GM23248 (cell line): ENCODE measurements at regions of chr16 and their contacts with region 1.

Region 1: GRCh38 chr16:25838724-25839186 is 147.0 kb downstream of the HS3ST4 start:
- DNase-seq: peak; percentile 67
- H3K4me3 ChIP-seq: 0 out of 2 replicates have a peak overlapping the region, but pooled peaks have one; percentile 35
- H3K27ac ChIP-seq: no peak overlapping the region
- H3K4me1 ChIP-seq: peaks cover 3% of the 10 kb centered on the region; the same call in 1 of the 2 replicates
- H3K27me3 ChIP-seq: no peaks in the 10 kb centered on the region; the same call in 1 of the 2 replicates

Region 2: GRCh38 chr16:25785361-25785760 is 53.4 kb before region 1 on chr16:
- in situ Hi-C with region 1: no loop called
- DNase-seq: no peak
- H3K4me3 ChIP-seq: no peak overlapping the region
- H3K27ac ChIP-seq: no peak overlapping the region
- H3K4me1 ChIP-seq: no peaks in the 10 kb centered on the region
- H3K27me3 ChIP-seq: no peaks in the 10 kb centered on the region

Region 3: DNA sequence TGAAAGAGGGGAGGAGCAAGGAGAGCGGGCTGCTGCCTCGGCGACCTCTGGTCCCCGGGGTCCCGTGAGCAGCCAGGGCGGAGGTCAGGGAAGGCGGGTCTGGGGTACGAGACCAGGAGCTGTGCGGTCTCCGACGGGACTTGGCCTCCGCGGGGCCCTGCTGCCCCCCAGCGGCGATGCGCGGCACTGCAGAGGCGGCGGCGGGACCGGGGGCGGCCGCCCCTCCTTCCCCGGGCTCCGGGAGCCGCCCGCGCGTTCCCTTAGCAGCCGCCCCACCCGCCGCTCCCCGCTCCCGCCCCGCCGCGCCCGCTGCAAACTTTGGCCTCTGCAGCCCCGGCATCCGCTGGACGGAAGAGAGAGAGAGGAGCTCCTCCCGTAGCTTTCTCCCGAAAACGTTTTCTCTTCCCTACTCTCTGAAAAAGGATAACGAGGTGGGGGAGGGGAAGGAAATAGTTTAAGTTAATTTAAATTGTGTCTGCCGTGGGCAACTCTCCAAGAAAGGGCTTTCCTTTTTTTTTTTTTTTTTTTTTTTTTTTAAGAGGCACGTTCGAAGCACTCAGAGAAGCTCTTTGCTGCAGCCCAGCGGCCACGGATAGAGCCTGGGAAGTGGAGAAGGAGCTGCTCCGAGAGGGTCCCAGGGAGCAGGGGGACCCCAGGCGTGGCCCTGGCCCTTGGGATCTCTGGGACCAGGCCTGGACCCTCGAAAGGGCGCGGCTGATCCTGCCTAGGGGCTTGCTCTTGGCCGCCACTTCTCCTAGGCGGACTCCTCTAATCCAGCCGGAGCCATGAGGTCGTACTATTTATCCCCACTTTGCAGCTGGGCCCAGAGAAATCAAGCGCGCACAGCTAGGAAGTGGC is 1271.1 kb after region 1 on chr16:
- in situ Hi-C with region 1: loop called (anchors 25 kb)
- DNase-seq: peak; percentile 85
- H3K4me3 ChIP-seq: peak overlapping the region; percentile 76
- H3K27ac ChIP-seq: no peak overlapping the region
- H3K4me1 ChIP-seq: no peaks in the 10 kb centered on the region
- H3K27me3 ChIP-seq: no peaks in the 10 kb centered on the region

Region 4: GRCh38 chr16:27367461-27368357 is 1529.0 kb after region 1 on chr16:
- in situ Hi-C with region 1: loop called (anchors 25 kb)
- DNase-seq: peak; percentile 84
- H3K4me3 ChIP-seq: peak overlapping the region; percentile 40
- H3K27ac ChIP-seq: peak overlapping the region; percentile 81
- H3K4me1 ChIP-seq: peaks cover 29% of the 10 kb centered on the region
- H3K27me3 ChIP-seq: no peaks in the 10 kb centered on the region

Region 5: GRCh38 chr16:27426423-27427408 is 1588.0 kb after region 1 on chr16:
- in situ Hi-C with region 1: loop called (anchors 25 kb)
- DNase-seq: peak; percentile 94
- H3K4me3 ChIP-seq: no peak overlapping the region
- H3K27ac ChIP-seq: peak overlapping the region; percentile 49
- H3K4me1 ChIP-seq: peaks cover under 1% of the 10 kb centered on the region; the same call in 1 of the 2 replicates
- H3K27me3 ChIP-seq: no peaks in the 10 kb centered on the region